ENCODE measurements at regions of chr2 and their contacts with region 1.

Region 1: DNA sequence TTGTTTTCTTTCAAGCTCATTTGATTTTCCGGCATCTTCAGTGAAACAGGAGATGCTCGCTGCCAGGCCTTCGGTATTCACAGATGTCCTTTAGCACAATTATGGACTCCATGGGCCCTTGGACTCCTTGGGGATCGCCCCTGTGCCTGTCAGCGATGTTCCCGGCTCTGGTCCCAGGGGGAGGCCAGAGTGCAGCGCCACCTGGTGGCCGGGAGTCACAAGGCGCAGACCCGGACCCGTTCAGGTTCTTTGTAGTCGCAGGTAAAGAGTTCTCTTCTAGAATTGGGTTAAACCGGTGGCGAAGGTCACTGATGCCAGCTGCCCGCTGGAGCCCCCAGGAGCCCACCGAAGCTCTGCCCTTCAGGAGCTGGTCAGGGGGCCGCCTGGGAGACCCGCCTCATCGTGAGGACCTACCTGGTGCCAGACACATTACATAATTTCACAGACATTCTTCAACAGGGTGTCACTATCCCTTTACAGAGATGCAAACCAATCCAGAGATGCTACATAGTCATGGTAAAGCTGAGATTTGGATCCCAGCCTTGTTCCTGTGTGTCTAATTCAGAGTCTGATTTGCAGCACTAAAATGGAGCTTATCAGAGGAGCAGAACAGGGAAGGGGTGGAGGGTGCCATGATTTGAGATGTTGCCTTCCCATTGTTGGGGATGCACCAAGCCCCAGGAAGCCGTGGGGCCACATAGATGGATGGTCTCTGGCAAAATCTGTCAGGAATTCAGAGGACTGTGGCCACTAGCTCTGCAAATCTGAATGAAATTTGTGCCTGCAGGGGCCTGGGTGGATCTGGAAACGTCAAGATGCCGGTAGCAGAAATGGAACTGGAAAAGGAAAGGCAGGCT is 6.0 kb upstream of the INPP5D start:
- DNase-seq: peak; percentile 83
- H3K4me3 Mint-ChIP-seq: no peak overlapping the region
- H3K27ac Mint-ChIP-seq: no peak overlapping the region
- H3K4me1 Mint-ChIP-seq: peaks cover 7% of the 10 kb centered on the region
- H3K27me3 Mint-ChIP-seq: peaks cover 2% of the 10 kb centered on the region

Region 2: DNA sequence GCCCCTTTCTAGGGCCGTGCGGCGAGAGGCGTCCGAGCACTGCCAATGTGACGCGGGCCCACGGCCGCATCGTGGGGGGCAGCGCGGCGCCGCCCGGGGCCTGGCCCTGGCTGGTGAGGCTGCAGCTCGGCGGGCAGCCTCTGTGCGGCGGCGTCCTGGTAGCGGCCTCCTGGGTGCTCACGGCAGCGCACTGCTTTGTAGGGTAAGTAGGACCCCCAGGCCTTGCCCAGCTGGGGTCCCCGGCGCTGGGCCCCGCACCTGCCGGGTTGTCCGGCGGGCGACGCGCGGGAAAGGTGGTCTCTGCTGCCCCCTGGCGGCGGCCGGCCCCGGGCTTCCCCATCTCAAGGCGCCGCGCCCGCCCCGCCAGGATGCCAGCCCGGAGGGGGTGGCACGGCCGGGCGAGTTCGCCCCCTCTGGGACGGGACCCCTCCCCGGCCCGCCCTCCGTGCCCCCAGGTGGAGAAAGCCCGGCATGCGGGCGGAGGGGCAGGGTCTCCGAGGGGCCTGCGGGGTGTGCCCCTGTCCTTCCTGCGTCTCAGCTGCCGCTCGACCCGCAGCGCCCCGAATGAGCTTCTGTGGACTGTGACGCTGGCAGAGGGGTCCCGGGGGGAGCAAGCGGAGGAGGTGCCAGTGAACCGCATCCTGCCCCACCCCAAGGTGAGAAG is 532.1 kb before region 1 on chr2:
- CTCF ChIA-PET with region 1: no interaction called
- POLR2A ChIA-PET with region 1: no interaction called
- intact Hi-C with region 1: no loop called
- DNase-seq: peak; percentile 68
- H3K4me3 Mint-ChIP-seq: no peak overlapping the region
- H3K27ac Mint-ChIP-seq: no peak overlapping the region
- H3K4me1 Mint-ChIP-seq: peaks cover 10% of the 10 kb centered on the region
- H3K27me3 Mint-ChIP-seq: peaks cover 38% of the 10 kb centered on the region

Region 3: GRCh38 chr2:232860593-232861241 is 193.4 kb before region 1 on chr2:
- CTCF ChIA-PET with region 1: interaction called, 11 read pairs
- POLR2A ChIA-PET with region 1: no interaction called
- intact Hi-C with region 1: no loop called
- DNase-seq: no peak
- H3K4me3 Mint-ChIP-seq: no peak overlapping the region
- H3K27ac Mint-ChIP-seq: no peak overlapping the region
- H3K4me1 Mint-ChIP-seq: peaks cover 4% of the 10 kb centered on the region
- H3K27me3 Mint-ChIP-seq: no peaks in the 10 kb centered on the region

Region 4: GRCh38 chr2:233075966-233076339 is 21.8 kb after region 1 on chr2:
- CTCF ChIA-PET with region 1: interaction called, 66 read pairs
- POLR2A ChIA-PET with region 1: interaction called, 4 read pairs
- intact Hi-C with region 1: no loop called
- DNase-seq: peak; percentile 44
- H3K4me3 Mint-ChIP-seq: no peak overlapping the region
- H3K27ac Mint-ChIP-seq: no peak overlapping the region
- H3K4me1 Mint-ChIP-seq: peaks cover 40% of the 10 kb centered on the region
- H3K27me3 Mint-ChIP-seq: no peaks in the 10 kb centered on the region

Region 5: GRCh38 chr2:233108611-233109490 is 54.7 kb after region 1 on chr2:
- CTCF ChIA-PET with region 1: interaction called, 12 read pairs
- POLR2A ChIA-PET with region 1: no interaction called
- intact Hi-C with region 1: no loop called
- DNase-seq: no peak
- H3K4me3 Mint-ChIP-seq: no peak overlapping the region
- H3K27ac Mint-ChIP-seq: peak overlapping the region; percentile 10
- H3K4me1 Mint-ChIP-seq: peaks cover 62% of the 10 kb centered on the region
- H3K27me3 Mint-ChIP-seq: no peaks in the 10 kb centered on the region

Region 6: GRCh38 chr2:233165895-233166661 is 111.9 kb after region 1 on chr2:
- CTCF ChIA-PET with region 1: no interaction called
- POLR2A ChIA-PET with region 1: no interaction called
- intact Hi-C with region 1: no loop called
- DNase-seq: peak; percentile 73
- H3K4me3 Mint-ChIP-seq: no peak overlapping the region
- H3K27ac Mint-ChIP-seq: no peak overlapping the region
- H3K4me1 Mint-ChIP-seq: no peaks in the 10 kb centered on the region
- H3K27me3 Mint-ChIP-seq: no peaks in the 10 kb centered on the region

Region 7: DNA sequence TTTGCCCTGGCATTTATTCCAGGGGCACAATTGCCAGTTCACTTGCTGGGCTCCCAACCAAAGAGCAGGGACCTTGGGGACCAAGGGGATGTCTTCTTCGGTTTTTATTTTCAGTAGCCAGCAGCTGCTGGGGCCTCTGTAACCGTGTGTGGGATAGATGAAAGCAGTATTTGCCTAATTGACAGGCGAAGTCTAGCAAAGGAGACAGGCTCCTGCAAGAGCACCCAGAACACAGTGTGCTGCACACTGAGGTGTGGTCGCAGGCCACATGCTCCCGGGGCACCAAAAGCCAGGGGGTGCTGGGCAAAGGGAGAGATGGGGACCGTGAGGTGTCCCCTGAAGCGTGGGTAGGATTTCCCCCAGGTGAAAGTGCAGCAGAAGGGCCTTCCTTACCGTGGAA is 258.7 kb after region 1 on chr2:
- CTCF ChIA-PET with region 1: no interaction called
- POLR2A ChIA-PET with region 1: no interaction called
- intact Hi-C with region 1: no loop called
- DNase-seq: no peak
- H3K4me3 Mint-ChIP-seq: no peak overlapping the region
- H3K27ac Mint-ChIP-seq: no peak overlapping the region
- H3K4me1 Mint-ChIP-seq: no peaks in the 10 kb centered on the region
- H3K27me3 Mint-ChIP-seq: no peaks in the 10 kb centered on the region

Region 8: DNA sequence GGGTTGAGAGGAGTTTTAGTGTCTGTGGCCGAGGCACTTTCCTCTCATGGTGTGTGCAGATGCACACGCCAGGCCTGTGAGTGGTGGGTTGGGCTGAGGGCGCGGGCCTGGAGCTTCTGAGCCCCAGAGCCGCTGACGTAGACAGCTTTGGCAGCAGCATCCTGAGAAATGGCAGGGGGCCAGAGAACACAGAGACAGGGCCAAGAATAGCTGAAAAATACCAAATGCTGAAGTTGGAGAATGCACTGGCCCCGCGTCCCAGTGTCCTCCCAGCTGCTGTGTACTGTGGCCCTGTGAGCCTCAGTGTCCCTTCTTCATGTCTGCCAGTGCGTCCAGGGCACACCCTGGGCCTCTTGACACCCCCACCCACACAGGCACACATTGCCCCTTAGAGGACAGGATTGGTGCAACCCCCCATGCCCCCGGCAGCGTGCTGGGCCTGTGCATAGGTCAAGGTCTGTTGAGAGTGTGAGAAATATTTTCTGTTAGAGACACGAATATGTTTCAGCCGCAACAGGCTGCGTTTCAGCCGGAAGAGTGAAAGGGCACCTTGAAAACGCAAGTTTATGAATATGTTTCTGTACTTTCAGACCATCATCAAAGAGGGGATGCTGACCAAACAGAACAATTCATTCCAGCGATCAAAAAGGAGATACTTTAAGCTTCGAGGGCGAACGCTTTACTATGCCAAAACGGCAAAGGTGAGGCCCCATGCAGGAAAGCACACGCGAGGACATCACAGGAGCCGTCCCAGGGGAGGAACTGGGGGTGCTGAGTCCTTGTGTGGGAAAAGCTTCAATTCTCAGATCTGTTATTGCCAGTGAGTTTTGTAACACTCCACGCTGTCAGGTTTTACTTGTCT is 333.7 kb after region 1 on chr2:
- CTCF ChIA-PET with region 1: no interaction called
- POLR2A ChIA-PET with region 1: no interaction called
- intact Hi-C with region 1: no loop called
- DNase-seq: no peak
- H3K4me3 Mint-ChIP-seq: no peak overlapping the region
- H3K27ac Mint-ChIP-seq: no peak overlapping the region
- H3K4me1 Mint-ChIP-seq: peaks cover 36% of the 10 kb centered on the region
- H3K27me3 Mint-ChIP-seq: no peaks in the 10 kb centered on the region

Measured in activated CD4-positive, alpha-beta memory T cell treated with anti-CD3 and anti-CD28 coated beads for 36 hours (primary cell).